ENCODE measurements at regions of chr16 and their contacts with region 1.

Region 1: DNA sequence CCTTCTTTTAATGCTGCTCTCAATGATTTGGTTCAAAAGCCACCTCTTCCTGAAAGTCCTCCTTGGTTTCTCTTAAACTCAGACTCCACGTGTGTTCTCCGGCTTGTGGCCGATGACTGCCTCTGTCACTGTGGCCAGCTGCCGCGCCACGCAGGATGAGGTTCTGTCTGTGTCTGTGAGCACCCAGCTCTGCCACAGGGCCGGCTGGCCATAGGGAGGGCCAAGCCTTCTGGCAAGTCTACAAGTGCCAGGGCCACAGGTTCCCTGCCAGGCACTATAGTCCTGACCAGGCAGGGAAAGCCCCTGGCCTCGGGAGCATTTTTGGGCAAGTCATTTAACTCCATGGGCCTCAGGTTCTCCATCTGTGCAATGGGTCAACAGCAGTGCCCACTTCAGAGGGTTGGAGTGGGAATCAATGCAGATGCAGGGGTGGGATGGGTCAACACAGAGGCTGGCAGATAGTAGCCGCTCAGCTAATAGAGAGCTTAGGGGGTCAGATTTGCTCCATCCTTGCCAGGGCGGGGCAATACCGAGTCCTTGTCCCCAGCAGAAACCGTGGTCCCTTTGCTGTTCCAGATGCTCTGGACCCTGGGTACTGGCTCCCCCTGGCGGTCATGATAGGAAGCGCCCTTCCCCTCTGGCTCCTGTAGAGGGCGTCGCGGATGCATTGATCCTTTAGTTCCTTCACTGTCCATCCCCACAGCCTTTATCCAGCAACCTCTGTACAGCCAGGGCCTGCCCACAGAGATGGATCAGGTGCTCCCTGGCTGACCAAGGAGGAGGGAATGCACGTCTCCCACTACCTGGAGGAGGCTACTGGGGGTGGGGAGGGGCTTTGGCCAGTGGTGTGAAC is 19.3 kb upstream of the ADGRG3 start:
- DNase-seq: peak; percentile 66 to 89 (median 88)
- ATAC-seq: peak; percentile 24 to 47
- H3K4me3 ChIP-seq: no peak overlapping the region
- H3K27ac ChIP-seq: peak overlapping the region; percentile 62
- H3K4me1 ChIP-seq: peaks cover 6% of the 10 kb centered on the region
- H3K27me3 ChIP-seq: no peaks in the 10 kb centered on the region

Region 2: DNA sequence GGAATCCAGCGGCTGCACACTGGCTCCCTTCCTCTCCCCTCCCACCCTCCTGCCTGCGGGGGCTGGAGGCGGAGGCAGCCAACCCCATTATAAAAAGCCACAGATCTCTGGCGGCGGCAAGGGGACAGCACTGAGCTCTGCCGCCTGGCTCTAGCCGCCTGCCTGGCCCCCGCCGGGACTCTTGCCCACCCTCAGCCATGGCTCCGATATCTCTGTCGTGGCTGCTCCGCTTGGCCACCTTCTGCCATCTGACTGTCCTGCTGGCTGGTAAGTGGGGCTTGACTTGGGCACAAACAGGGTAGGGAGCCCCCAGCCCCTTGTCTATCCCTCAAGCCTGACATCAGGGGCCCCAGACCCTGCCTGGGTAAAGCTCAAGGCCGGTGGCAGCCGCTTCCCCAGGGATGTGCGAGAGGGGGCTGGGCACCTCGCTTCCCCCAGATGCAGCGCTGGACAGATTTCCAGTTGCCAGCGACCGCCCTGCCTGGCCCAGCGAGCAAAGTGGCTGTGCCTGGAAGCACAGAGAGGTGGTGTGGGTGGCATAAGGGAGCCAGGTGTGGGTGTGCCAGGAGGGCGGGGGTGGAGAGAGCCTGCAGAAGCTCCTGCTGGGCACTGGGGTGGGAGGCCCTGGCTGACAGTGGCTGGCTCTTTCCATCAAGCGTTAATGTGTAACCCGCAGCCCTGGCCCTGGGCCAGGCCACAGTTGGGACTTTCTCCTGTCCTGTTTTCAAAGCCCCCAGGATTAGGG is 276.3 kb before region 1 on chr16 and contains the start of gene CX3CL1:
- intact Hi-C with region 1: no loop called
- DNase-seq: peak; percentile 80 to 90 (median 86)
- ATAC-seq: peak; percentile 91
- H3K4me3 ChIP-seq: peak within 1 kb of the TSS; percentile 55
- H3K27ac ChIP-seq: peak within 1 kb of the TSS; percentile 84
- H3K4me1 ChIP-seq: no peaks in the 10 kb centered on the region
- H3K27me3 ChIP-seq: no peaks in the 10 kb centered on the region
- total RNA-seq, gene CX3CL1: 8.2 to 14.2 (median 10.5) TPM

Region 3: DNA sequence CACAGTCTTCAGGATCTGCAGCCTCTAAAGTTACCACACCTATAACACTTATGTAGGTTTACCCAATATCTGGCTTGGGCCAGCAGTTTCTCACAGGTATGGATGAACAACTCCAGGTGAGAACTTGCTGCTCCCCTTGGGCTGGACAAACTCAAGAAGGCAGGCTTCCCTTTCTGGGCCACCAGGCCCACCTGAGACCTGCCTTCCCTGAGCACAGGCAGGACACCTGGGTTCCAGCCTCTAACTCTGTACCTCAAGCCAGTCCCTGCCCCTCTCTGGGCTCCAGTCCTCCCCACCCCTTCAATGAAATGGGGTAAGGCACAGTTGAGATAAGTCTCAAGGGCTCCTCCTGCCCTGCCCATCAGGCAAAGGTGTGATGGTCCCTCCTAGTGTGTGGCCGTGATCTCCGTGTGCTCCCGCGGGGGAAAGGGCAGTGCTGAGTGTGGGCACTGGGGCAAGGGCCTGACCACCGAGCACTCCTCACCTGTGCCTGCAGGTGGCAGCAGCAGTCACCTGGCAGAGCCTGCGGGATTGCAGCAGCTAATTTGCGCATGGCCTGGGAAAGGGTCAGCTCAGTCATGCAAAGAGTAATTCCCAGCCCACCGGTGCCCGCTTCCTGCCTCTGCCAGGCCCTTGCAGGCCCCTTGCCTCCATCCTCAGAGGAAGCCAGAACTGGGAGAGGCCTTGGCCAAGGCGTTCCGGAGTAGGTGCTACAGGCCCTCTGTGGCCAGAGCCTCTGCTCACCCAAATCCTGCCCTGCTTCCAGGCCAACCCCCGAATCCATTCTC is 48.6 kb before region 1 on chr16:
- intact Hi-C with region 1: loop called in 3 of 4 experiments (anchors 2 to 5 kb)
- DNase-seq: peak; percentile 41 to 77 (median 76)
- ATAC-seq: peak; percentile 82 to 89
- H3K4me3 ChIP-seq: no peak overlapping the region
- H3K27ac ChIP-seq: no peak overlapping the region
- H3K4me1 ChIP-seq: no peaks in the 10 kb centered on the region
- H3K27me3 ChIP-seq: no peaks in the 10 kb centered on the region

Region 4: GRCh38 chr16:57609541-57610401 is 39.0 kb before region 1 on chr16:
- intact Hi-C with region 1: loop called in 2 of 4 experiments (anchors 2 to 5 kb)
- DNase-seq: peak in 2 of 3 donors; percentile 69 to 74
- ATAC-seq: peak; percentile 85 to 87
- H3K4me3 ChIP-seq: no peak overlapping the region
- H3K27ac ChIP-seq: peak overlapping the region; percentile 21
- H3K4me1 ChIP-seq: peaks cover 6% of the 10 kb centered on the region
- H3K27me3 ChIP-seq: no peaks in the 10 kb centered on the region

Measured in right cardiac atrium (tissue), 5 donors.